Left colon (tissue), 2 donors: ENCODE measurements at regions of chr2 and their contacts with region 1.

Region 1: DNA sequence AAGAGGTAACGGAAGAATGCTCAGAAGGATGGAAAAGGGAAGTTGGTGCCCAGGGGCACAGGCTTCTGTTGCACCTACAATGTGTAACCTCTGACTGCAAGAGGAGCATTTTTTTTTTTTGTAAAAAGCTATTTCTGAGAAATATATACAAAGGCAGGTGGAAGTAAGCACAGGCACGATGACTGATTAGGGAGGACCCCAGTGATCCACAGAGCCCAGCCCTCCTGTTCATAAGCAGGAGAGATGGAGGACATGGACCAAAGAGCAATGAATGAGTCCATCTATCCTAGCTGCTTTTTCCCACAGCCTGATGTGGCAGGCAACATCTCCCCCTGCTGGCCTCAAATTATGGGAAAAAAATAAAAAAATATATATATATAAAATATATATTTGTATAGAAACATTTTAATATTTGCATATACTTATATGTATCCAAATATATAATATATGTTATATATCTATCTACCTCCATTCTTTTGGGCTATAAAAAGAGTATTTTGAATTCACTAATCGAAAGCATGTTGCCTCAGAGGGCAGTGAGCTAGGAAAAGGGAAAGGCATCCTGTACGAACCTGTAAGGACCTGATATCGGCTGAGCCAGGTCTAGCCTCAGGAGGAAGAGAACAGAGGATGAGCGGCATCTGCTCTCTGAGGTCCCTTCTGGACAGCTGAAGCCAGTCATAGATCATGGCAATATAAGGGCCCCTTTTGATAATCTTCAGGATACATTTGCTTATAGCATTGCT is 166.0 kb upstream of the STK17B start:
- DNase-seq: peak in 1 of 2 donors; percentile 7
- ATAC-seq: peak; percentile 40

Region 2: DNA sequence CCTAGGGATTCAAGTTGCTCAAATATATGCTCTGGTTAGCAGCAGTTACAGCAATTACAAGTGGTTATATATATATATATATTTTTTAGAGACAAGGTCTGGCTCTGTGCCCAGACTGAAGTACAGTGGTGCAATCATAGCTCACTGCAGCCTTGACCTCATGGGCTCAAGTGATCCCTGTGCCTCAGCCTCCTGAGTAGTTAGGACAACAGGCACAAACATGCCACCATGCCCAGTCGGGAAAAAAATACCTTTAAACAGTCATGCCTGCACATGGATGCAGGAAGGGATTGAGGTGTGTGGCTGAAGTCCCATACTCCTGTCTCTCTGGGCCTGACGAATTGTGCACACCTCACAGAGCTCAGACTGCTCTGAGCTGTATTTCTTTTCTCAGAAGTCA is 249.2 kb before region 1 on chr2:
- intact Hi-C with region 1: loop called in 1 of 2 experiments (anchors 10 kb)
- DNase-seq: peak; percentile 38 to 57
- ATAC-seq: peak; percentile 89